GM10248 (cell line): ENCODE measurements at regions of chr22 and their contacts with region 1.

Region 1: DNA sequence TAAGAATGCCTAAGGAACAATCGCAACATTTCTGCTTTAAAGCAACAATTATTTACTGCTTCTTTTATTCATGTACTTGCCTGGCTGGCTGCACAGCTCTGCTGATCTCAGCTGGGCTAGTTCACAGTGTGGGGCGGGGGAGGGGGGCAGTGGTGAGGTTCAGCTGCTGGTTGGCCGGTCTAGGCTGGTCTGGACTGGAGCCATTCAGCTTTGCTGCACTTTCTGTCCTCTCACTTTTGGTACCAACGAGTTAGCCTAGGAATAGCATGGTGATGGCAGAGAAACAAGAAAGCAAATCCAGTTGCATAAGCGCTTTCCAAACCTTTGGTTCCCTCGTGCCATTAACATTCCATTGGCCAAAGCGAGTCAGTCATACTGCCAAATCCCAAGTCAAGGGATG is 16.0 kb upstream of the MIF start:
- DNase-seq: no peak
- CTCF ChIP-seq: no peak

Region 2: DNA sequence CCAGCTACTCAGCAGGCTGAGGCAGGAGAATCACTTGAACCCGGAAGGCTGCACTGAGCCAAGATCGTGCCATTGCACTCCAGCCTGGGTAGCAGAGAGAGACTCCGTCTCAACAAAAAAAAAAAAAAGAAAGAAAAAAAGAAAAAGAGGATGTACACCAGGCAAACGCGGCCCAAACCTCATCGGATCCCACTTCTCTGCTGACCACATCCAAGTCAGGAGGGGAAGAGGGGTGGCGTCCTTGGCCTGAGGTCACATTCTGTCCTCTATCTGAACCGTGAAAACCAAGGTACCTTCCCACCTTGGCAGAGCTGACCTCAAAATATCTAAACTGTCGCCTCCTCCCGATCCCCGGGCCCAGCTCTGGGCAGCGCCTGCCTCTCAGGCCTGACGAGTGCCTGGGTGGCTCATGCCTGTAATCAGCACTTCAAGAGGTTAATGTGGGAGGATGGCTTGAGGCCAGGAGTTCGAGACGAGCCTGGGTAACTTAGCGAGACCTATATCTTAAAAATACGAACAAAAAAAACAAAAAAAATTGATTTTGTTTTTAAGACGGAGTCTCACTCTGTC is 162.3 kb before region 1 on chr22:
- CTCF ChIA-PET with region 1: no interaction called
- POLR2A ChIA-PET with region 1: no interaction called
- DNase-seq: no peak
- CTCF ChIP-seq: no peak

Region 3: DNA sequence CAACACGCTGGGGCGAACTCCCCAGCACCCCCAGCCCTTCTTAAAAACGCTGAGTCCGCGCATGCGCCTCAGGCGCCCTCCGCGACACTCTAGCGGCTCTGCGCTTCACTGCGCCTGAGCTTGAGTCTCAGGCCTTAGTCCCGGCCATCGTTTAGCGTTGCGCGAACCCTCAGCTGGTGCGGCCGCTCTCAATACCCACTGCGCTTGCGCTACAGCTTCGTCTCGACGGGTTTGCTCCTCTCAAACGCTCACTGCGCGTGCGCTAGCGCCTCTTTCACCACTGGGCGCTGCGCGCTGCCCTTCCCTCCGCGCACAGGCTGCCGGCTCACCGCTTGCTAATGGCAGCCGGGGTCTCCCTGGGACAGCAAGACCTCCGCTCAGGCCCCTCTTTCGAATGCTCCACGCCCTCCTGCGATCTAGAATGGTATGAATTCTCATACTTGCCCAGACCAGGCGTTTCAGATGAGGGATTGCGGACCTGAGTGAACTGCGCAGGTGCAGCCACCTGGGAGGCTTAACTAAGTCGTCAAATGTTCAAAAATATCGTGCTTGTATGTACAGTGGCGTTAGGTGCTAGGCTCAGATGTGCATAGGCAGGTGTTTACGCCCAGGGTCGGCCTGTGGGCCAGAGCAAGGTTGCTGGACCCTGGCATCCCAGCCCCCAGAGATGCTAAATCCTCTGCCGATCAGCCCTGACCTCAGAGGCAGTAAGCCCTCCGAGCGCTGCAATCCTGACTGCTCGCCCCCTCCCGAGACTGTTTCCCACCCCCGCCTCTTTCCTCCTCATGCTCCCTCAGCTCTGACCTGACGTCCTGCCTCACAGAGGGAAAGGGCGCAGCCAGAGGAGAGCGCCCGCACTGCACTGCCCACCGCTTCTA is 20.4 kb before region 1 on chr22 and contains the start of gene SLC2A11:
- CTCF ChIA-PET with region 1: interaction called, 18 read pairs
- POLR2A ChIA-PET with region 1: interaction called, 3 read pairs
- DNase-seq: peak; percentile 98
- CTCF ChIP-seq: peak; percentile 17

Region 4: GRCh38 chr22:23893943-23894709 is 15.9 kb after region 1 on chr22 and contains the start of gene MIF:
- CTCF ChIA-PET with region 1: interaction called, 31 read pairs
- POLR2A ChIA-PET with region 1: no interaction called
- DNase-seq: peak; percentile 99
- CTCF ChIP-seq: peak; percentile 71

Region 5: GRCh38 chr22:23913661-23914353 is 35.6 kb after region 1 on chr22:
- CTCF ChIA-PET with region 1: no interaction called
- POLR2A ChIA-PET with region 1: no interaction called
- DNase-seq: peak; percentile 99
- CTCF ChIP-seq: no peak